HEK293 (cell line): ENCODE measurements at regions of chr5 and their contacts with region 1.

Region 1: DNA sequence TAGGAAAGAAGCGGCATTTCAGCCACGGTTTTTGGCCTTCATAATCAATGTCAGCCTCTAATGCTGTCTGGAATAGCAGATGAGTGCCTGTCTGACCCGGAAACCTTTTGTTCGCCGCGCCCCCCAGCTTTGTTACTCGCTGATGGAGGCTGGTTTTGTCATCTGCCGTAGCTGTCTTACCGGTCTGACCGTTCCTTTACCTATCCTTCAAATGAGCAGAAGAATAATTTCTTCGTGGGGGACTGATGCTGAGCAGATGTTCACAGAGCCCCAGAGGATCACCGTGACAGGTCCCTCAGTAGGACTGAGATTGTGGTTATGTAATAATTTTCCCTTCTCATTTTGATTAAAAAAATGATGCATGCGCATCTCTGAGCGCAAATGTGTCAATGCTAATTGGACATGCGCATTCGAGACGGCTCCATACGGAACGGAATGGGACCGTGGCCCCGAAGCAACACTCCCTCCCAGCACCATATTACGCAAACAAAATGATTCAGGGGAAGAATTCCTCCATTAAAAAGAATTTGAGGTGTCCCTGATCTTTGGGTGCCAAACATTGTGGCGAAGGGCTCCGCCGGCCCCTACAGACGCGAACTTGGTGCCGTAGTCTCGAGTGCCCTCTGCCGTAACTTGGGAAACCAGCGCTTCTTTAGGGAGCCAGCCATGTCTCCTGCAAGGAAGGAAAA is 27.6 kb downstream of the TLX3 start:
- H3K4me3 ChIP-seq: peak overlapping the region; percentile 43
- H3K27ac ChIP-seq: no peak overlapping the region
- H3K4me1 ChIP-seq: no peaks in the 10 kb centered on the region
- CTCF ChIP-seq: peak; percentile 45; the same call in 1 of the 2 replicates

Region 2: GRCh38 chr5:171207256-171207847 is 129.3 kb before region 1 on chr5:
- CTCF ChIA-PET with region 1: interaction called, 101 read pairs
- POLR2A ChIA-PET with region 1: interaction called, 3 read pairs
- H3K4me3 ChIP-seq: no peak overlapping the region
- H3K27ac ChIP-seq: no peak overlapping the region
- H3K4me1 ChIP-seq: no peaks in the 10 kb centered on the region
- CTCF ChIP-seq: no peak

Region 3: DNA sequence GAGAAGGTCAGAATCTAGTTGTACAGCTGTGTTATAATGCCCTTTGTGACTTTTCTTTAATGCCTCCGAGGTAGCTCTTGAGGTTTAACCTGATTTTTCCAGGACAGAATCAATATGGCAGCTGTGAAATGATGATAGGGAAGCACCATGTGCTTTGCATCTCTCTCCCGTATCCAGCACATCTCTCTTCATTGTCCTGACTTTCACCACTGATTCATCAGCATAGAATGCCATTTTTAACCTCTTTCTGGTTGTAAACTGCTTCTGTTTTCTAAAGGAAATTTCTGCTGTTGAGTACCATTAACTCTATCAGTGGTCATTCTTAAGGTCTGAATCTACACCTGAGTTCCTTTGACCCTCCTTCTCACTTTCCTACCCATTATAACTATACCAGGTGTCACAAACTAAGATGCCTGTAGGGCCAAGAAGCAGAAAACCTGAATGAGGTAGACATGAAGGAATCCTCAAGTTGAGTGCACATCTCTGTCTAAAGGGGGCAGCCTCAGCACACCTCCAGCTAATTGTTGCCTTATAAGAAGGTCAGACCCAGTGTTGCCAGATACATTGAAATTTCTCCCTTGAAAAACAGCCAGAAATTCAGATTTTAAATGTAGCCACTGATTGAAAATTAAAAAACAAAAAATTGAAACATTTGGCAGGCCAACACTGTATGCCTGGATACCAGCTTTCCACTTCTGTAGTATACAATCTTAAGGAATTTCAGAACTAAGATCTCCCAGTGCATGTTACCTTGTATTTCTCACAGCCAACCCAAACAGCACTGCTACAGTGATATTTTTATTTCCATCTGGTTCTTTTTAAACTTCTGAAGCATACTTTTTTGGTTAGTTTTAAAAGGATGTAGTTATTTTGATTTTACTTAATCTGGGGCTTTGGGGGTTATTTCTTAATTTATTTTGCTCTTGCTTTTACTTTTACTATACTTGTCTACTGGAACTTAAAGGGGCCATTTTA is 63.4 kb before region 1 on chr5:
- CTCF ChIA-PET with region 1: interaction called, 49 read pairs
- POLR2A ChIA-PET with region 1: no interaction called
- H3K4me3 ChIP-seq: no peak overlapping the region
- H3K27ac ChIP-seq: no peak overlapping the region
- H3K4me1 ChIP-seq: peaks cover 14% of the 10 kb centered on the region
- CTCF ChIP-seq: peak; percentile 42; the same call in 1 of the 2 replicates